ENCODE measurements at regions of chr11 and their contacts with region 1.

Region 1: DNA sequence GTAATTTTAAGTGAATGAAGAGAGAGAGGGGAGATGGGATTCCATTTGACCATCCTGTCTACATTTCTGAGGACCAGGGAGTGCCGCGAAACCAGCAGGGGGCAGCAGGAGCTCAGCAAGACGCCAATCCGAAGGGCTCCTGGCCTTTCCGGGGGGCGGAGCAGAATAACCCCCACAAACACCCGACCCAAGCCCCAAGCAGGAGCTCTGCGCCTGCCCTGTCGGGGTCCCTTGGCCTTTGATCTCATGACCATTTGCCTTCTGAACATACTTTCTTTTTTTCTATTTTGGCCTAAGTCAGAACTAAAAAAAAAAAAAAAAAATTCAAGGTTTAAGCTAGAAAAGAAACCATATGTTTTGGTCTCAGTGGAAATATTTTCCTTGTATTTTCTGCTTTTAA is 21.9 kb upstream of the SCN2B start:
- DNase-seq: peak; percentile 80 to 91 (median 83)
- ATAC-seq: peak; percentile 33 to 64 (median 55)
- H3K4me3 ChIP-seq: peak overlapping the region in 5 of 12 donors; percentile 22 to 42 (median 28)
- H3K27ac ChIP-seq: peak overlapping the region in 8 of 12 donors; percentile 10 to 50 (median 33)
- H3K4me1 ChIP-seq: peaks cover 0 to 57% (median 25%) of the 10 kb centered on the region in 12 donors
- H3K27me3 ChIP-seq: no peaks in the 10 kb centered on the region
- CTCF ChIP-seq: peak; percentile 84 to 93 (median 90)
- POLR2A ChIP-seq: no peak

Region 2: GRCh38 chr11:117817368-117818040 is 380.9 kb before region 1 on chr11:
- intact Hi-C with region 1: no loop called
- DNase-seq: peak; percentile 78 to 88 (median 80)
- ATAC-seq: peak; percentile 43 to 73 (median 67)
- H3K4me3 ChIP-seq: peak overlapping the region in 6 of 12 donors; percentile 7 to 47 (median 32)
- H3K27ac ChIP-seq: peak overlapping the region in 6 of 12 donors; percentile 28 to 75 (median 42)
- H3K4me1 ChIP-seq: peaks cover 0 to 60% (median 28%) of the 10 kb centered on the region in 12 donors
- H3K27me3 ChIP-seq: no peaks in the 10 kb centered on the region
- CTCF ChIP-seq: peak; percentile 97 to 100 (median 99)
- POLR2A ChIP-seq: no peak

Region 3: DNA sequence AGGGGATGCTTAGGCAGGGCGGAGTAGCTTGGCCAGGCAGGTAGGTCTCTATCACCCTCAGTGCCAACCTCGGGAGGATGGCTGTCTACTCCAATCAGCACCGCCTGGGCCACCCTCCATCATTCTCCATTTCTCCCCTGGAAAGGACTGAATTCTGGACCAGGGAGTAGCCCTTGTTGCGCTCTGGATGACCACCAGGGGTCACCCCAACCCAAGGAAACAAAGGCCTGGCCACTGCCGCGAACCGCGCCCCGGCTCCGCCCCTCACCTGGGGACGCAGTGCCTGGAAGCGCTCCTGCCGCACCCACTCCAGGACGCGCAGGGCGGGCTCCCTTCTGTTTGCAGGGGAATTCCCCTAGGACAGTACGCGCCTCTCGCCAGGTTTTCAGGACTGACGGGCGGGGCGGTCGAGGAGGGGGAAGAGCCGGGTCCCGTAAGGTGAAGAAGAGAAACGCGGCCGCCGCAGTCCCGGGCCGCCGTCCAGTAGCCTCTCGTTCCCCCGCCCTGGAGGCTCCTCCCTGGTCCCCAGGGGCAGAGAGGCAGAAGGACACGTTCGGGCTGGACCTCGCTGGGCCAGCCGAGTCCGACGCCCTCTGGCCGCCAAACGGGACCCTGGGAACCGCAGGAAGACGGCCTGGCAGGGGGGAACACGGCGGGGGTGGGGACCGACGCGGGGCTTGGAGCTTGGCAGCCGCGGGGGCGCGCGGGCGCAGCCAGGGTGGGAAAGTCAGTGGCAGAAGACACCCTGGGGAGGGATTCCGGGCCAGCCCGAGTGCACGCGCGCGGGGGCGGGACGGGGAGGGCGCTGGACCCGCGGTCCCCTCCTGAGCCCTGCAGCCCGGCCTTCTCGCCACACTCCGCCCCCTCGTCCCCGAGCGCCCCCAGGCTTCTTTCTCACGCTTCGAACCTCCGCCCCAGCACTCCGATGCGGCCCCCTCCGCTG is 52.8 kb before region 1 on chr11:
- intact Hi-C with region 1: loop called in 1 of 10 experiments (anchors 1 kb)
- DNase-seq: peak; percentile 83 to 93 (median 87)
- ATAC-seq: peak; percentile 81 to 90 (median 86)
- H3K4me3 ChIP-seq: peak overlapping the region; percentile 22 to 92 (median 60)
- H3K27ac ChIP-seq: peak overlapping the region in 10 of 12 donors; percentile 41 to 80 (median 74)
- H3K4me1 ChIP-seq: peaks cover 0 to 60% (median 21%) of the 10 kb centered on the region in 12 donors
- H3K27me3 ChIP-seq: peaks cover 0 to under 1% (median 0%) of the 10 kb centered on the region in 9 donors
- CTCF ChIP-seq: peak; percentile 85 to 97 (median 94)
- POLR2A ChIP-seq: peak in 1 of 2 donors; percentile 28

Region 4: DNA sequence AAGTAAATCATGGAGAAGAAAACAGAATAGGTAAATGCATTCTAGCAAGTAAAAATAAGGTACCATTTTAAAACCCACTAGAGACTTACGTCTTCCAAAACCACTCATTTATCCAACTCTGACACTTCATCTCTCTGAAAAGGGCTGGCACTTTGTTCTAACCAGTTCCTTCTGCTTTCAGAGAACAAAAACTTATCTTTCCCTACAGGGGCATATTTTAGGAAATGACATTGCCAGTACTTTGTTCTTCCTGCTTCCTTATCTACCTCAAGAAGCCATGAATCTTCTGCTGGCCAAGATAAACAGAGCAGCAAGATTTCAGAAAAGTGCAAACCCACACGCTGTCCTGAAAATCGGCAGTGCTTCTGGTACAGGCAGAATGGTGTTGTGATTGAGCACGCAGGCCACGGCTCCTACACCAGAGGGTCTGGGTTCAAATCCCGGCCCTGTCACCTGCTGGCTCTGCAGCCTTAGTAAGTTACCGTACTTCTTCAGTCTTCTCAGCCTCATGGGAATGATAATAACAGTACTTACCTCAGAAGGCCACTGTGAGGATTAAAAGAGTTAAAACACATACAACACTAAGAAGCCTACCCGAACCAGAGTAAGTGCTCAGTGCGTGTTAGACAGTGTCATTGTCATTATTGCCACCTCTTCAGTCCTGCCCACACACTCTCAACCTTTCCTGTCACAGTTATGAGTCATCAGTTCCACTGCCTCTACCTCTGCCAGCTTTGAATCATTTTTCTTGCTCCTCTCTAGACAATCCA is 42.8 kb after region 1 on chr11:
- intact Hi-C with region 1: loop called in 1 of 10 experiments (anchors 5 kb)
- DNase-seq: peak in 2 of 5 donors; percentile 12 to 46
- ATAC-seq: peak; percentile 82 to 95 (median 91)
- H3K4me3 ChIP-seq: peak overlapping the region in 1 of 12 donors; percentile 30
- H3K27ac ChIP-seq: peak overlapping the region in 11 of 12 donors; percentile 6 to 90 (median 56)
- H3K4me1 ChIP-seq: peaks cover 0 to 44% (median 13%) of the 10 kb centered on the region in 12 donors
- H3K27me3 ChIP-seq: no peaks in the 10 kb centered on the region
- CTCF ChIP-seq: no peak
- POLR2A ChIP-seq: peak in 1 of 2 donors; percentile 22

Region 5: DNA sequence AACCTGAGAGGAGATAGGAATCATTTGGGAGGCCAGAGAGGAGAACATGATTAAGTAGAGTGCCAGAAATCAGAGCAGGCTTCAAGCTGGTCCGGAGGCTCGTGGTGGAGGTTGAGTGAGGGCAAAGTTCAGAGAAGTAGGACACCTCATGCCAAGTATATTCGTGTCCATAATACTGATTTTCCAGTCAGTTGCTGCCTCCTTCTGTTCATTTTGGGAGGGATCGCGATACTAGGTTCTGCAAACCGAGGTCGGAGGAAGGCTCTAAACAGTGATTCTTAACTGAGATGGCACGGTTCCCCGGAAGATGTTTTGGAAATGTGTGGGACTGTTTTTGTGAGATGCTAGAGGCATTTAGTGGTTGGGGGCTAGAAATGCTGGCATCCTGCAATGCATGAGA is 92.6 kb after region 1 on chr11:
- intact Hi-C with region 1: loop called (anchors 1 to 5 kb)
- DNase-seq: peak in 1 of 5 donors; percentile 23
- ATAC-seq: peak; percentile 67 to 88 (median 82)
- H3K4me3 ChIP-seq: peak overlapping the region in 1 of 12 donors; percentile 9
- H3K27ac ChIP-seq: peak overlapping the region in 1 of 12 donors; percentile 10
- H3K4me1 ChIP-seq: no peaks in the 10 kb centered on the region
- H3K27me3 ChIP-seq: no peaks in the 10 kb centered on the region
- CTCF ChIP-seq: peak in 11 of 12 donors; percentile 18 to 61 (median 44)
- POLR2A ChIP-seq: no peak

Region 6: GRCh38 chr11:118359295-118359958 is 161.1 kb after region 1 on chr11 and contains the start of gene UBE4A:
- intact Hi-C with region 1: loop called in 5 of 10 experiments (anchors 5 kb)
- DNase-seq: peak; percentile 95 to 98 (median 97)
- ATAC-seq: peak; percentile 90 to 98 (median 96)
- H3K4me3 ChIP-seq: peak within 1 kb of the TSS; percentile 65 to 86 (median 79)
- H3K27ac ChIP-seq: peak within 1 kb of the TSS in 11 of 12 donors; percentile 3 to 80 (median 66)
- H3K4me1 ChIP-seq: peaks cover 0 to 30% (median 20%) of the 10 kb centered on the region in 12 donors
- H3K27me3 ChIP-seq: no peaks in the 10 kb centered on the region
- CTCF ChIP-seq: peak in 1 of 12 donors; percentile 9
- POLR2A ChIP-seq: peak in 1 of 2 donors; percentile 53
- total RNA-seq, gene UBE4A: 35.6 to 50.3 (median 40.9) TPM

Region 7: DNA sequence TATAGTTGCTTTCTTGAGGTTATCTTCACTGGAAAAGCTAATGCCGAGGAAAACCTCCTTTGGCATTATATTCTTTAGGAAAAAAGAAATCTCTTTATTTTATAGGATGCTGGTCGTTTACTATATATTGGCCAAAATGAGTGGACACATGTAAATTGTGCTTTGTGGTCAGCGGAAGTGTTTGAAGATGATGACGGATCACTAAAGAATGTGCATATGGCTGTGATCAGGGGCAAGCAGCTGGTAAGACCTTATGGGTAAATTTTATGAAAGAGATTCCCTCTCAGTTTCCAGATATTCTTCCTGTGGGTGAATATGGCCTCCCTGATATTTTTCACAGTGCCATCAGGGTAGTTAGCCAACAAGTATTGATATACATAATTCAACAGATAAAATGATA is 299.5 kb after region 1 on chr11:
- intact Hi-C with region 1: loop called in 1 of 10 experiments (anchors 10 kb)
- DNase-seq: no peak
- ATAC-seq: no peak
- H3K4me3 ChIP-seq: no peak overlapping the region
- H3K27ac ChIP-seq: no peak overlapping the region
- H3K4me1 ChIP-seq: peaks cover 0 to 15% (median under 1%) of the 10 kb centered on the region in 12 donors
- H3K27me3 ChIP-seq: no peaks in the 10 kb centered on the region
- CTCF ChIP-seq: no peak
- POLR2A ChIP-seq: no peak

Measured in heart left ventricle (tissue), 16 donors.